CD4-positive, alpha-beta memory T cell (primary cell): ENCODE measurements at regions of chr20 and their contacts with region 1.

Region 1: DNA sequence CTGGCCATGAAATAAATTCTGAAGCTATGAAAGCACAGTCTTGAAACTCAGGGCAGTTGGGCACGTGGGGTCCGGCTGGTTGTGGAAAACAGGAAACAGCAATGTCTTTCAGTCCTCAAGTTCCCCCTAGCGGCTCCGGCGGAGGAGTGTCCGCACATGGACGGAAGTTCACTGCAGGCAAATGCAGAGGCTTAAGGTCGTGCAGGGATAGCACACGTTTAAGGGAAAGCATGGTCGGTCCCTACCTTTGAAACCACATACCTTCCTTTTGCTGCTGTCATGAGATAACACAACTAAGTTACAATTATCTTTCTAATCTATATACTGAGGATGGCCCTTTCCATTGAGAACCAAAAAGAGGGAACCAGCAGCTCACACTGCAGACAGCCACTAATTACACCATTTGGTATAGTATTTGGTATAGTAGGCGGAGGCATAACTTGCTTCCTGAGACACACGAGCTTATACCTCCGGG is 52.6 kb upstream of the NFATC2 start:
- DNase-seq: peak; percentile 62 to 72 (median 69)
- H3K4me3 ChIP-seq: no peak overlapping the region
- H3K4me3 Mint-ChIP-seq: peak overlapping the region in 7 of 8 donors; percentile 4 to 63 (median 36)
- H3K27ac ChIP-seq: no peak overlapping the region
- H3K27ac Mint-ChIP-seq: peak overlapping the region in 3 of 7 donors; percentile 27 to 68 (median 38)
- H3K4me1 ChIP-seq: peaks cover 10% of the 10 kb centered on the region
- H3K4me1 Mint-ChIP-seq: peaks cover 6 to 12% (median 8%) of the 10 kb centered on the region in 4 donors
- H3K27me3 ChIP-seq: no peaks in the 10 kb centered on the region
- H3K27me3 Mint-ChIP-seq: peaks cover 3 to 6% of the 10 kb centered on the region in 2 donors

Region 2: GRCh38 chr20:50987592-50988210 is 607.4 kb before region 1 on chr20:
- CTCF ChIA-PET with region 1: interaction called, 3 read pairs
- POLR2A ChIA-PET with region 1: no interaction called
- intact Hi-C with region 1: loop called (anchors 1 kb)
- DNase-seq: peak; percentile 64 to 76 (median 72)
- H3K4me3 ChIP-seq: no peak overlapping the region
- H3K4me3 Mint-ChIP-seq: no peak overlapping the region
- H3K27ac ChIP-seq: no peak overlapping the region
- H3K27ac Mint-ChIP-seq: no peak overlapping the region
- H3K4me1 ChIP-seq: no peaks in the 10 kb centered on the region
- H3K4me1 Mint-ChIP-seq: peaks cover 0 to 2% (median under 1%) of the 10 kb centered on the region in 4 donors
- H3K27me3 ChIP-seq: no peaks in the 10 kb centered on the region
- H3K27me3 Mint-ChIP-seq: peaks cover 22 to 26% of the 10 kb centered on the region in 2 donors

Region 3: DNA sequence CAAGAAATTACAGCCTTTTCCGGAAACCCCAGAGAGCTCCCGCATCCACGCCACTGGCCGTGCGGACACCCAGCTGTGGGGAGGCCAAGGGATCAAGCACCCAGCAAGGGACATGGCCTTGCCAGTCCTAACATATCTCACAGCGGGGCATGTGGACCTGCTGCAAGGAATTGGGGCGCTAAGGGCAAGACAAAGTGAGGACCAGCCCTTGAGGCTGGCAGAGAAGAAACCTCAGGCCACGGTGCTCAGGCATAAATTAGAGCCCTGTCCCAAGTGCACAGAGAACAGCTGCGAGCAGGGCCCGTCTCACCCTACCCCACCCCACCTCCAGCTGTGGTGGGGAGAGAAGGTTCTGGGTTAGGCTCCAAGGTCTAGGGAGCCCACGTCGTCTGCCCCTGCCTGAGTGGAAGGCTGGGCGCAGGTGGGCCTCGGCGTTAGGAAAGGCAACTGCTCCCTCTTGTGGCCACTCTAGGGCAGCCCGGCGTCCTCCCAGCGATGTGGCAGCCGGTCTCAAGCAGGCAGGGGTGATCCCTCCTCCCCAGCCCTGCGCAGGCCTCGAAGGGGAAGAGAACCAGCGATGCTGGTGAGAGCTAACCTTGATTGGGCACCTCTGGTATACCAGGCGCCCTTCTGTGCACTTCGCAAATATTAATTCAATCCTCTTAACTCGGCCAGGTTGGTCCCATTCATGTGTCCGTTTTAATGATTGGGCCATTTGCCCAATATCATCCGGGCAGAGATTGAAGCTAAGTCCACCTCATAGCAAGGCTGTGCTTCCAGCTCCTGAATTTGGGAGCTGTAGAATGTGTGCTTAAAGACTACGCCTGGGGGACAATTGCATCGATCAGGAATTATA is 288.4 kb before region 1 on chr20:
- CTCF ChIA-PET with region 1: interaction called, 10 read pairs
- POLR2A ChIA-PET with region 1: no interaction called
- intact Hi-C with region 1: no loop called
- DNase-seq: peak; percentile 55 to 65 (median 59)
- H3K4me3 ChIP-seq: no peak overlapping the region
- H3K4me3 Mint-ChIP-seq: no peak overlapping the region
- H3K27ac ChIP-seq: no peak overlapping the region
- H3K27ac Mint-ChIP-seq: peak overlapping the region in 2 of 7 donors; percentile 12 to 39
- H3K4me1 ChIP-seq: no peaks in the 10 kb centered on the region
- H3K4me1 Mint-ChIP-seq: peaks cover 0 to 6% (median 3%) of the 10 kb centered on the region in 4 donors
- H3K27me3 ChIP-seq: no peaks in the 10 kb centered on the region
- H3K27me3 Mint-ChIP-seq: peaks cover 13 to 15% of the 10 kb centered on the region in 2 donors

Region 4: DNA sequence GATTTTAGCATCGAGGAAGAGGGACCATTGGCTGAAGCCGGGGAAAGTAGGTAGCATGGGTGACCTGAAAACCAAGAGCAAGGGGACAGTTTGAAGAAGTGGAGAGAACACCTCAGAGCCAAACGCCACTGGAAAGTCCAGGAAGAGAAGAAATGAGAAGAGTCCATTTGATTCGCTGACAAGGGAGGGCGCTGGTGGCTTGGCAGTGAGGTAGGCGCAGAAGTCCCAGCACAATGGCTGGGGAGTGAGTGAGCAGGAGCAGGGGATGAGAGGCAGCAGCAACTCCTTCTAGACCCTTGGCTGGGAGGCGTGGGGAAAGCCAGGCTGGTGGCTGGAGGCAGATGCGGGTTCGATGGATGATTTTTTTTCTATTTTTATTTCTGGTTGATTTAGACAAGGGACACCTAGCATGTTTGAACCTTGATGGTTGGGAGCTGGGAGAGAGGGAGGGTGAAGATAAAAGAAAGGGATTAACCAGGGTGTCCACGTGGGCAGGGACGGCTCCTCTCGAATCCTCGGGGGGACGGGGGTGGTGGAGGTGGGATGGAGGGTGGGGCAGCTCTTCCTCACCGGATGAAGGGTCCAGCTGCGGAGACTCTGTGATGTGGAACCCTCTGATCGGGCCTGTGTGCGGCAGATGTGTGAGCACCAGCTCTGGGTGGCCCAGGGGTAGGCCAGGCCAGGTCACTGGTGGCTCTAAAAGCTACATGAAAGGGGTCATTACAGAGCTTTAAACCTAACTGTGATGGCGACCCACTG is 216.7 kb before region 1 on chr20:
- CTCF ChIA-PET with region 1: interaction called, 66 read pairs
- POLR2A ChIA-PET with region 1: no interaction called
- intact Hi-C with region 1: loop called (anchors 1 kb)
- DNase-seq: no peak
- H3K4me3 ChIP-seq: no peak overlapping the region
- H3K4me3 Mint-ChIP-seq: no peak overlapping the region
- H3K27ac ChIP-seq: no peak overlapping the region
- H3K27ac Mint-ChIP-seq: peak overlapping the region in 4 of 7 donors; percentile 19 to 82 (median 64)
- H3K4me1 ChIP-seq: no peaks in the 10 kb centered on the region
- H3K4me1 Mint-ChIP-seq: peaks cover 0 to 3% (median 2%) of the 10 kb centered on the region in 4 donors
- H3K27me3 ChIP-seq: no peaks in the 10 kb centered on the region
- H3K27me3 Mint-ChIP-seq: no peaks in the 10 kb centered on the region

Region 5: GRCh38 chr20:51423290-51423667 is 171.8 kb before region 1 on chr20:
- CTCF ChIA-PET with region 1: interaction called, 12 read pairs
- POLR2A ChIA-PET with region 1: no interaction called
- intact Hi-C with region 1: no loop called
- DNase-seq: peak in 1 of 5 donors; percentile 30
- H3K4me3 ChIP-seq: no peak overlapping the region
- H3K4me3 Mint-ChIP-seq: peak overlapping the region in 7 of 8 donors; percentile 12 to 84 (median 79)
- H3K27ac ChIP-seq: peak overlapping the region; percentile 71
- H3K27ac Mint-ChIP-seq: peak overlapping the region; percentile 87 to 95 (median 94)
- H3K4me1 ChIP-seq: peaks cover 87% of the 10 kb centered on the region
- H3K4me1 Mint-ChIP-seq: peaks cover 60 to 95% (median 71%) of the 10 kb centered on the region in 4 donors
- H3K27me3 ChIP-seq: no peaks in the 10 kb centered on the region
- H3K27me3 Mint-ChIP-seq: no peaks in the 10 kb centered on the region

Region 6: GRCh38 chr20:51512645-51513044 is 82.5 kb before region 1 on chr20:
- CTCF ChIA-PET with region 1: interaction called, 12 read pairs
- POLR2A ChIA-PET with region 1: no interaction called
- intact Hi-C with region 1: no loop called
- DNase-seq: peak in 3 of 5 donors; percentile 35 to 50 (median 35)
- H3K4me3 ChIP-seq: no peak overlapping the region
- H3K4me3 Mint-ChIP-seq: peak overlapping the region; percentile 33 to 71 (median 56)
- H3K27ac ChIP-seq: peak overlapping the region; percentile 31
- H3K27ac Mint-ChIP-seq: peak overlapping the region; percentile 55 to 95 (median 85)
- H3K4me1 ChIP-seq: peaks cover 86% of the 10 kb centered on the region
- H3K4me1 Mint-ChIP-seq: peaks cover 63 to 91% (median 75%) of the 10 kb centered on the region in 4 donors
- H3K27me3 ChIP-seq: no peaks in the 10 kb centered on the region
- H3K27me3 Mint-ChIP-seq: no peaks in the 10 kb centered on the region

Region 7: DNA sequence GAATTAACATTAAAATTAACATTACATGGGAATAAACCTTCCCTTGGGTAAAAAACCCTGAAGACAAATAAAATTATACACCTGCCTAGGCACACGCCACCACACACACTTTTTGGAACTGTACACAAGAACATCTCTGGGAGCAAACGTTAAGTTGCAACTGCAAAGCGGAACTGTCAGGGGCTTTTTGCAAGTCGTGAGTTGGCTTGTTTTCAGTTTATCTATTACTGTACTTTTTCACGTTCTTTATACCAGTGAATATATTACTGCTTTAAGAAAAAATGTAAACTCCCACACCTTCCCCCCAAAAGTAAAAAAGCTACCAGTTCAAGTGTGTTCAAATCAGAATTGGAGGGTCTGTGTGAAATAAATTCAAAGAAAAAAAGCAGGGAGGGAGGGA is 13.0 kb after region 1 on chr20:
- CTCF ChIA-PET with region 1: interaction called, 17 read pairs
- POLR2A ChIA-PET with region 1: interaction called, 3 read pairs
- intact Hi-C with region 1: no loop called
- DNase-seq: no peak
- H3K4me3 ChIP-seq: no peak overlapping the region
- H3K4me3 Mint-ChIP-seq: peak overlapping the region in 3 of 8 donors; percentile 1 to 18 (median 2)
- H3K27ac ChIP-seq: no peak overlapping the region
- H3K27ac Mint-ChIP-seq: no peak overlapping the region
- H3K4me1 ChIP-seq: peaks cover 27% of the 10 kb centered on the region
- H3K4me1 Mint-ChIP-seq: peaks cover 3 to 28% (median 17%) of the 10 kb centered on the region in 4 donors
- H3K27me3 ChIP-seq: peaks cover 6% of the 10 kb centered on the region
- H3K27me3 Mint-ChIP-seq: peaks cover 20 to 35% of the 10 kb centered on the region in 2 donors